WTC11 (cell line): ENCODE measurements at regions of chr9 and their contacts with region 1.

Region 1: GRCh38 chr9:68872026-68872501 is 141.8 kb downstream of the PRKACG start:
- DNase-seq: peak; percentile 85
- ATAC-seq: peak; percentile 84
- H3K4me3 Mint-ChIP-seq: peak overlapping the region; percentile 37; the same call in 1 of the 2 replicates
- H3K27ac Mint-ChIP-seq: peak overlapping the region; percentile 99
- H3K4me1 Mint-ChIP-seq: peaks cover 95% of the 10 kb centered on the region
- H3K27me3 Mint-ChIP-seq: no peaks in the 10 kb centered on the region
- CTCF ChIP-seq: no peak

Region 2: GRCh38 chr9:68844631-68845612 is 27.1 kb before region 1 on chr9:
- CTCF ChIA-PET with region 1: interaction called, 13 read pairs
- POLR2A ChIA-PET with region 1: no interaction called
- DNase-seq: peak; percentile 65
- ATAC-seq: peak; percentile 83
- H3K4me3 Mint-ChIP-seq: no peak overlapping the region
- H3K27ac Mint-ChIP-seq: no peak overlapping the region
- H3K4me1 Mint-ChIP-seq: peaks cover 15% of the 10 kb centered on the region
- H3K27me3 Mint-ChIP-seq: no peaks in the 10 kb centered on the region
- CTCF ChIP-seq: peak; percentile 49

Region 3: GRCh38 chr9:68905129-68905528 is 33.1 kb after region 1 on chr9:
- CTCF ChIA-PET with region 1: no interaction called
- POLR2A ChIA-PET with region 1: no interaction called
- DNase-seq: no peak
- ATAC-seq: peak; percentile 50
- H3K4me3 Mint-ChIP-seq: no peak overlapping the region
- H3K27ac Mint-ChIP-seq: peak overlapping the region; percentile 12; the same call in 1 of the 2 replicates
- H3K4me1 Mint-ChIP-seq: peaks cover 13% of the 10 kb centered on the region
- H3K27me3 Mint-ChIP-seq: no peaks in the 10 kb centered on the region
- CTCF ChIP-seq: no peak

Region 4: GRCh38 chr9:68981789-68982188 is 109.7 kb after region 1 on chr9:
- CTCF ChIA-PET with region 1: no interaction called
- POLR2A ChIA-PET with region 1: no interaction called
- DNase-seq: no peak
- ATAC-seq: peak; percentile 62
- H3K4me3 Mint-ChIP-seq: no peak overlapping the region
- H3K27ac Mint-ChIP-seq: peak overlapping the region; percentile 73
- H3K4me1 Mint-ChIP-seq: peaks cover 43% of the 10 kb centered on the region
- H3K27me3 Mint-ChIP-seq: no peaks in the 10 kb centered on the region
- CTCF ChIP-seq: no peak

Region 5: GRCh38 chr9:69044240-69045219 is 172.5 kb after region 1 on chr9:
- CTCF ChIA-PET with region 1: no interaction called
- POLR2A ChIA-PET with region 1: no interaction called
- DNase-seq: no peak
- ATAC-seq: peak; percentile 81
- H3K4me3 Mint-ChIP-seq: no peak overlapping the region
- H3K27ac Mint-ChIP-seq: peak overlapping the region; percentile 36
- H3K4me1 Mint-ChIP-seq: peaks cover 44% of the 10 kb centered on the region
- H3K27me3 Mint-ChIP-seq: no peaks in the 10 kb centered on the region
- CTCF ChIP-seq: no peak